PC-9 (cell line): ENCODE measurements at regions of chr3 and their contacts with region 1.

Region 1: DNA sequence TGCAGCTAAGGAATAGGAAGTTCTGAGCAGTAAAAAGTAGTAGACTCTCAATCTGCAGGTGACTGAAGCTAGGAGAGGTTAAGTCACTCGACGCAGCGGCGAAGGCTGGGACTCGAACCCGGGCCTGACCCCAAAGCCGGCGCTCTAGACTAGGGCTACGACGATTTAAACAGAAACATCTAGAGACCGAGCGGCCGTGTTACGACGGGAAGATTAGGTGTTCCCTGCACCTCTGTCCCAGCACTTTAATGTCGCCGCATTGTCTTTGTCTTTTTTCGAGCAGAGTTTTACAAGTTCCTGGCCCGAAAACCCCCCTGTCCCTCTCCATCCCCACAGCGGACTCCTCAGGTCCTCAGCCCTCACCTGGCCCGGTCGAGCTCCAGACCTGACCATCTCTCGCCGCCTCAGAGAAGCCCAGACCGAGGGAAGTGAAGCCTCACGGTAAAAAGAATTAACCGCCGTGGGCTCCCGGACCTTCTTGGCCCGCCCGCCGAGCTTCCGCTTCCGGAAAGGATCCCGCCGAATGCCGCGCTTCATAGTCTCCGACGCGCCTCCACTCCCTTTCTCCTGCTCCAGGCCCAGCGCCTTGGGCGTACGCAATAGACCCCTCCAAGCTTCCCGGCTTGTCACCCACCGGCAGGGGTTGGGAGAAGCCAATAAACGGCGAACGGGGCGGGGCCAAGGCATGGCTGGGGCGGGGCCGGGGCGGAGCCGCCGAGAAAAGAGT is at the start of gene CCDC14:
- DNase-seq: peak; percentile 86 to 94
- H3K4me3 ChIP-seq: peak within 1 kb of the TSS; percentile 73
- H3K27ac ChIP-seq: peak within 1 kb of the TSS; percentile 49
- H3K4me1 ChIP-seq: peaks cover 14% of the 10 kb centered on the region
- H3K27me3 ChIP-seq: peaks cover 11% of the 10 kb centered on the region; the same call in 1 of the 2 replicates
- CTCF ChIP-seq: no peak
- total RNA-seq, gene CCDC14: 36.5 and 50.6 TPM in 2 replicates

Region 2: GRCh38 chr3:123732473-123733157 is 228.3 kb before region 1 on chr3:
- CTCF ChIA-PET with region 1: no interaction called
- POLR2A ChIA-PET with region 1: no interaction called
- intact Hi-C with region 1: loop called (anchors 5 kb)
- DNase-seq: peak; percentile 68 to 91
- H3K4me3 ChIP-seq: no peak overlapping the region
- H3K27ac ChIP-seq: no peak overlapping the region
- H3K4me1 ChIP-seq: peaks cover 36% of the 10 kb centered on the region
- H3K27me3 ChIP-seq: 0 out of 2 replicates have a peak, but pooled peaks cover 2% of the 10 kb centered on the region
- CTCF ChIP-seq: no peak

Region 3: GRCh38 chr3:124007186-124007585 is 46.2 kb after region 1 on chr3:
- CTCF ChIA-PET with region 1: interaction called, 11 read pairs
- POLR2A ChIA-PET with region 1: no interaction called
- intact Hi-C with region 1: no loop called
- DNase-seq: no peak
- H3K4me3 ChIP-seq: no peak overlapping the region
- H3K27ac ChIP-seq: no peak overlapping the region
- H3K4me1 ChIP-seq: no peaks in the 10 kb centered on the region
- H3K27me3 ChIP-seq: peaks cover 29% of the 10 kb centered on the region
- CTCF ChIP-seq: no peak